PC-9 (cell line): ENCODE measurements at regions of chr11 and their contacts with region 1.

Region 1: DNA sequence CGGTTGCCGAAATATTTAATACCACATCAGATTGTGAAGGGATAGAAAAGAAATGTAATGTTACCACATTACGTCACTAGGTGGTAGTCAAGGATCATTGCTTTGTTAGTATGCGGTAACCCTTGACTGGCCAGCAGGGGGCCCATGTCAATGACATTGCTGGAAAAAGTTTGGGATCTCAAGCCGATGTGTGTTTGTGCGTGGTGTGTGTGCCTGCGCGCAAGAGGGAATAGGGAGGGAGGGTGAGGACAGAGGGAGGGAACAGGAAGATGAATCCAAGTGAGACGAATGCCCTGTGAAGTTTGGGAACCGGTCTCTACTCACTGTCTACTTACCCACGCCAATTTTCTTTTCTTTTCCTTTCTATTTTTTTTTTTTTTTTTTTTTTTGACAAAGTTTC is 10.7 kb upstream of the MRGPRX2 start:
- DNase-seq: peak; percentile 65 to 77
- H3K4me3 ChIP-seq: peak overlapping the region; percentile 39; the same call in 1 of the 2 replicates
- H3K27ac ChIP-seq: no peak overlapping the region
- H3K4me1 ChIP-seq: peaks cover 30% of the 10 kb centered on the region
- H3K27me3 ChIP-seq: no peaks in the 10 kb centered on the region
- CTCF ChIP-seq: peak; percentile 99

Region 2: GRCh38 chr11:19060629-19061028 is 10.6 kb before region 1 on chr11 and contains the start of gene MRGPRX2:
- CTCF ChIA-PET with region 1: interaction called, 13 read pairs
- POLR2A ChIA-PET with region 1: no interaction called
- intact Hi-C with region 1: no loop called
- DNase-seq: no peak
- H3K4me3 ChIP-seq: no peak within 1 kb of the TSS
- H3K27ac ChIP-seq: no peak within 1 kb of the TSS
- H3K4me1 ChIP-seq: no peaks in the 10 kb centered on the region
- H3K27me3 ChIP-seq: peaks cover 42% of the 10 kb centered on the region
- CTCF ChIP-seq: no peak
- total RNA-seq, gene MRGPRX2: not detected in 2 replicates

Region 3: DNA sequence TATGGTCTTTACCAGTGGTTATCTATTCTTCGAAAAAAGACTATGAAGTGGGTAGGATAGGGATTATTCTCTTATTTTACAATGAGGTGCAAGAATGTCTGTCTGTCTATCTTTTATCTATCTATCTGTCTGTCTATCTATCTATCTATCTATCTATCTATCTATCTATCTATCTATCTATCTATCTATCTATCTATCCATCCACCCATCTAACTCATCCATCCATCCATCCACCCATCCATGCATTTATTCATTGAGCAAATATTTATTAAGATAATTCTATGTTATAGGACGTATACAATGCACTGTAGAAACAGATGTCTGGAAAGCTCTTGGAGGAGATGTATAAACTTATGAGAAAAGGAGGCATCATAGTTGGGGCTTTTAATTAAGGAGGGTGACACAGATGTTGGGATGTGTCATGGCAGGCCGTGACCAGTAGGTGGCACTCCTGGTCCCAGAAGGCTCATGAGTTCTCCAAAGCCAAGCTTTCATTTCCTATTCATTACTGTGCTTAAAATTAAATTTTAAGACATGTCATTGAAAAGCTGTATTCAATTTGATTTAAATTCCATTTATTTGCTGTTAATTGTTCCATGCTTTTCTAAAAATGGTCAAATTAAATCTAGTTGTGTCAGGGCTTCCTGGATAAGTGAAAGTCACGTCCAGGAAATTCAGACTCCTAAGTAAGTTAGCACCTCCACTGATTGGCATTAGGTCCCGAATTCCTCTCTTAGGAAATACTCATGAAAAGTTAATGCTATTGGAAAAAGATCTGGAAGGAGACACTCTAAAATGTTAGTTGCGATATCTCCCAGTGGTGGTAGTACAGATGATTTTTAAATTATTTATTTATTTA is 188.5 kb after region 1 on chr11:
- CTCF ChIA-PET with region 1: interaction called, 4 read pairs
- POLR2A ChIA-PET with region 1: no interaction called
- intact Hi-C with region 1: loop called (anchors 1 kb)
- DNase-seq: peak; percentile 49 to 73
- H3K4me3 ChIP-seq: no peak overlapping the region
- H3K27ac ChIP-seq: no peak overlapping the region
- H3K4me1 ChIP-seq: no peaks in the 10 kb centered on the region
- H3K27me3 ChIP-seq: no peaks in the 10 kb centered on the region
- CTCF ChIP-seq: peak; percentile 99

Region 4: GRCh38 chr11:19441752-19442553 is 370.7 kb after region 1 on chr11:
- CTCF ChIA-PET with region 1: interaction called, 3 read pairs
- POLR2A ChIA-PET with region 1: no interaction called
- intact Hi-C with region 1: loop called (anchors 2 kb)
- DNase-seq: peak; percentile 91 to 100
- H3K4me3 ChIP-seq: peak overlapping the region; percentile 5; the same call in 1 of the 2 replicates
- H3K27ac ChIP-seq: peak overlapping the region; percentile 89
- H3K4me1 ChIP-seq: peaks cover 92% of the 10 kb centered on the region
- H3K27me3 ChIP-seq: no peaks in the 10 kb centered on the region
- CTCF ChIP-seq: no peak

Region 5: DNA sequence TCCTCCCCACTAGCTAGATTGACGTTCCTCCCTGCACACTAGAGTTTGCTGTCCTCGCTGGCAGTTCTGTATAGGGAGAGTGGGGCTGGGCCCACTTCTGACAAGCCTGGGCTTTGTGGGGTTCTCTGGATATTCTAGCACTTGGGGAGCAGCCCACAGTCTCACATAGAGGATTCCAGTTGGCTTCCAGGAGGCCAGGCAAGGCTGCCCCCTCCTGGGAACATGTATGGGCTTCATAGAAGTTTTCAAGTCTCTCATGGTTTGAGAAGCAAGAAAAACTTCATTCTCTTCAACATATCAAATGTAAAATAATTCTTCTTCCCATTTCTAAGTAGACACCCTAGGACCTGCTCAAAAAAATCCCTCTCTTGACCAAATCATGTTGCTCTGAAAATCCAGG is 728.9 kb after region 1 on chr11:
- CTCF ChIA-PET with region 1: no interaction called
- POLR2A ChIA-PET with region 1: no interaction called
- intact Hi-C with region 1: loop called (anchors 10 kb)
- DNase-seq: no peak
- H3K4me3 ChIP-seq: no peak overlapping the region
- H3K27ac ChIP-seq: peak overlapping the region; percentile 43
- H3K4me1 ChIP-seq: peaks cover 57% of the 10 kb centered on the region
- H3K27me3 ChIP-seq: no peaks in the 10 kb centered on the region
- CTCF ChIP-seq: no peak; the same call in 1 of the 2 replicates

Region 6: DNA sequence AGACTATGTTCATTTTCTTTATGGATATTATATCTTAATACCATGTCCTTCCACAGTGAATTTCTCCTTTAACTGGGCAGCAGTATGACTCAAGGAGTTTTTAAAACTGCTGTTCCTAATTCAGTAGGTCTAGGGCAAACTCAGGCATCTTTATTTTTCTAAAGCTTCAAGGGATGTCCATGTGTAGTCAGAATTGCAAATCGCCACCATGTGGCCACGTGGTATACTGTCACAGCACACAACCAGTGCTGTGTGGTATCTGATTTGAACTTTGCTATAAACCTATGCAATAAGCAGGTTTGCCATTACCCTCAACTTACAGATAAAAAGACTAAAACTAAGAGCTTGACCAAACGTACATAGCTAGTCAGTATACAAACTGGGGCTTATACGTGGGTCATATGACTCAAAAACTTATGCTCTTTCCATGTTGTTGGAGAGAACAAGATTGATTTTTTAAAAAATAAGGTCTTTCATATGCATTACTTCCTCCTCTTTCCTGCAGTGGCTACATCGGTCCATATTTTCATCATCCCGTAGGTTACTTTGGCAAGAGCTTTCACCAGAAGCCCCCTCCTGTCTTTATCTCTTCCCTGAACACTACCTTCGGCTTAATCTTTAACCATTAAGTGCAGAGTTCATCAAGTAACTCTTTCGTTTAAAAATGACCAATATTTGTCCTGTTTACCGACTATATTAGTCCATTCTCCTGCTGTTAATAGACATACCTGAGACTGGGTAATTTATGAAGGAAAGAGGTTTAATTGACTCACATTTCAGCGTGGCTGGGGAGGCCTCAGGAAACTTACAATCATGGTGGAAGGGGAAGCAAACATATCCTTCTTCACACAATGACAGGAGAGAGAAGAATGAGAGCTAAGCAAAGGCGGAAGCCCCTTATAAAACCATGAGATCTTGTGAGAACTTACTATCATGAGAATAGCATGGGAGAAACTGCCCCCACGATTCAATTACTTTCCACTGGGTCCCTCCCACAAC is 1284.3 kb after region 1 on chr11:
- CTCF ChIA-PET with region 1: no interaction called
- POLR2A ChIA-PET with region 1: no interaction called
- intact Hi-C with region 1: loop called (anchors 5 kb)
- DNase-seq: peak in 1 of 2 experiments; percentile 46
- H3K4me3 ChIP-seq: no peak overlapping the region
- H3K27ac ChIP-seq: no peak overlapping the region
- H3K4me1 ChIP-seq: no peaks in the 10 kb centered on the region; the same call in 1 of the 2 replicates
- H3K27me3 ChIP-seq: no peaks in the 10 kb centered on the region
- CTCF ChIP-seq: peak; percentile 74